Spleen (tissue), 13 donors: ENCODE measurements at regions of chr2 and their contacts with region 1.

Region 1: DNA sequence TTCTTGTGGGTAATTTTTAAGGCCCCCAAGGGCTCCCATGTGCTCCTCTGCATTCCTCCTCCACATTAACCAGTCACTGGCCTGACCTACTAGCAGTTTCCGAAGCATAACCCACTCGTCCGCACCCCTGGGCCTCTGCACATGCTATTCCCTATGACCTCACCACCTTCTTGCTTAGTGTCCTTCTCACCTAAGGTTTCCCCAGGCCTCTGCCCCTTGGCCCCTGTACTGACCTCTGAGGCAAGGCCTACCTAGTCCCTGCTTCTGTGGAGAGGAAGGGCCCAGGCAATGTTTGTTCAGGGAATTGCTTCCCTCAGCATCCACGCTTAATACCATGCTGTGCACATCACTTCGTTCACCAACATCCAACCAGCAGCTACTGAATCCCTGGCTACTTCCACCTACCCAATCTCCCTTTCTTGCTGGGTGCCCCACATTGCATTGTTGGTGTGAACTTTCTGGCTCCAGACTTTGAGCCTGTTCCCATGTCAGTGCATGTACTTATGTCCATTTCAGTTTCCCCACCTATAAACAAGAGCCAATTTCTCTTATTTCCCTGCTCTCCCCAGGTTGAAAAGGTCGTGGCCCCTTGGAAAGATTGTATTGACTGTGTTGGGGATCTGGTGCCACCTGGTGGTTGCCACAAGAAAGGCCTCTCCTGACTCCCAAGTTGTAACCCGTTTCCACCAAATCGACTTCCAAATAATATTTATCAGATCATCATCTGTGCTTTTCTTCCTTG is 19.2 kb upstream of the TMEM177 start:
- DNase-seq: no peak
- H3K4me3 ChIP-seq: no peak overlapping the region
- H3K27ac ChIP-seq: no peak overlapping the region
- H3K4me1 ChIP-seq: peaks cover 0 to 15% (median 2%) of the 10 kb centered on the region in 6 donors
- H3K27me3 ChIP-seq: peaks cover 0 to 21% (median 0%) of the 10 kb centered on the region in 7 donors
- CTCF ChIP-seq: peak; percentile 56 to 90 (median 79)
- POLR2A ChIP-seq: no peak

Region 2: DNA sequence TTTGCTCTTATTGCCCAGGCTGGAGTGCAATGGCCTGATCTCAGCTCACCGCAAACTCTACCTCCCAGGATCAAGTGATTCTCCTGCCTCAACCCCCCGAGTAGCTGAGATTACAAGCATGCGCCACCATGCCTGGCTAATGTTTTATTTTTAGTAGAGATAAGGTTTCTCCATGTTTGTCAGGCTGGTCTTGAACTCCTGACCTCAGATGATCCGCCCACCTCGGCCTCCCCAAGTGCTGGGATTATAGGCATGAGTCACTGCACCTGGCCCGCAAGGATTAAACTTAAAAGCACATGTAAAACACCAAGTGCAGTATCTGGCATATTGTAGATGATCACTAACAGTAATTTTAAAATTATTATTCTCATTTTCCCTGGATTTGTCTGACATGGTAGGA is 574.2 kb before region 1 on chr2:
- intact Hi-C with region 1: no loop called
- DNase-seq: no peak
- H3K4me3 ChIP-seq: no peak overlapping the region
- H3K27ac ChIP-seq: no peak overlapping the region
- H3K4me1 ChIP-seq: no peaks in the 10 kb centered on the region
- H3K27me3 ChIP-seq: peaks cover 0 to 7% (median 0%) of the 10 kb centered on the region in 7 donors
- CTCF ChIP-seq: no peak
- POLR2A ChIP-seq: no peak

Region 3: GRCh38 chr2:119407430-119408220 is 252.1 kb before region 1 on chr2:
- intact Hi-C with region 1: loop called (anchors 5 kb)
- DNase-seq: no peak
- H3K4me3 ChIP-seq: no peak overlapping the region
- H3K27ac ChIP-seq: peak overlapping the region in 1 of 8 donors; percentile 2
- H3K4me1 ChIP-seq: peaks cover 0 to 4% (median 0%) of the 10 kb centered on the region in 6 donors
- H3K27me3 ChIP-seq: no peaks in the 10 kb centered on the region
- CTCF ChIP-seq: peak; percentile 42 to 86 (median 67)
- POLR2A ChIP-seq: no peak